ENCODE measurements at regions of chr9 and their contacts with region 1.

Region 1: GRCh38 chr9:4297151-4297785 is 2.6 kb downstream of the GLIS3 start:
- DNase-seq: peak; percentile 11
- H3K4me3 Mint-ChIP-seq: peak overlapping the region; percentile 95
- H3K27ac Mint-ChIP-seq: peak overlapping the region; percentile 91
- H3K4me1 Mint-ChIP-seq: peaks cover 45% of the 10 kb centered on the region
- H3K27me3 Mint-ChIP-seq: peaks cover 42% of the 10 kb centered on the region

Region 2: GRCh38 chr9:2837915-2838314 is 1459.4 kb before region 1 on chr9:
- intact Hi-C with region 1: loop called (anchors 5 kb)
- DNase-seq: no peak
- H3K4me3 Mint-ChIP-seq: no peak overlapping the region
- H3K27ac Mint-ChIP-seq: no peak overlapping the region
- H3K4me1 Mint-ChIP-seq: peaks cover 30% of the 10 kb centered on the region
- H3K27me3 Mint-ChIP-seq: no peaks in the 10 kb centered on the region

Region 3: DNA sequence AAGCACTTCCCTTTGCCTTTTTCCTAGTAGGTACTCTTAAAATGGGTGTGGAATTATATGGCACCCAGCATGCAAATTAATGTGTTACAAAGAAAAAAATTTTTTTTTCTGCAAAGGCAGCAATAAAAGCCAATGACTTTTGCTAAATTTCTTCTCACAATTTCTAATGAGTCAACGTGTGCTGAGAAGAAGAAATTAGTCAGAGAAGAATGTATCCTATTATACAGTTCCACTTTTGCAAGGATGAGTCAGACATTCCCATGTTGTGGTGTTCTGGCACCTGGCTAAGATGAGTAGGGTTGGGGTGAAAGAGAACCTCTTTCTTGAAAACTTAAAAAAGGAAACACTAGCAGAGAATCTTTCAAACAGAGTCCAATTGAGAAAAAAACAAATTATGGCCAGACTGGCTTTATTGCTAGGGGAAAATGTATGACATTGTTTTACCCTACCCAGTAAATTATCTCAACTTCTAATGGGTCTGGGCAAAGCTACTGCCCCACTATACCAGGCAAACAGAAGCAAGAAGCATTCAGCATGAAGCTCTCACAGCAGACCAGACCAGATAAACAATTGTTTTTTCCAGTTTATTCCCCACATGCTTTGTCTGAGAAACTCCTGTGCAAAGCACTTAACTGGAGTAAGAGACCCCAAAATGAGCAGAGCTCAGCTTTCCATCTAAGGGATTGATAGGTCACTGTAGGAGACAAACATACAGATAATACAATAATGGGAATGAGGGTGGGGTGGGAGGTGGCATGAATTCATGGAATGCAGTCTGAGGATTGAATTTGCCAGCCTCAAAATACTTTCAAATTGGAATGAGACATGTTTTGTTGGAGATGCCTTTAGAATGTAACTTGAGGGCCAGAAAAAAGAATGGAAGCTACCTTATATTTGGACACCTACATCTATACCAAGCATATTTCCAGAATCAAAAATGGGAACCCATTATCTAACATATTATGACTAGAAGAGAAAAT is 550.7 kb before region 1 on chr9:
- intact Hi-C with region 1: loop called (anchors 5 kb)
- DNase-seq: no peak
- H3K4me3 Mint-ChIP-seq: peak overlapping the region; percentile 4
- H3K27ac Mint-ChIP-seq: peak overlapping the region; percentile 83
- H3K4me1 Mint-ChIP-seq: peaks cover 41% of the 10 kb centered on the region
- H3K27me3 Mint-ChIP-seq: no peaks in the 10 kb centered on the region

Region 4: GRCh38 chr9:4315582-4316215 is 18.4 kb after region 1 on chr9:
- intact Hi-C with region 1: no loop called
- DNase-seq: peak; percentile 60
- H3K4me3 Mint-ChIP-seq: no peak overlapping the region
- H3K27ac Mint-ChIP-seq: no peak overlapping the region
- H3K4me1 Mint-ChIP-seq: peaks cover 5% of the 10 kb centered on the region
- H3K27me3 Mint-ChIP-seq: peaks cover 13% of the 10 kb centered on the region

Region 5: GRCh38 chr9:4339357-4339756 is 42.1 kb after region 1 on chr9:
- intact Hi-C with region 1: loop called (anchors 1 kb)
- DNase-seq: peak; percentile 69
- H3K4me3 Mint-ChIP-seq: no peak overlapping the region
- H3K27ac Mint-ChIP-seq: peak overlapping the region; percentile 77
- H3K4me1 Mint-ChIP-seq: peaks cover 10% of the 10 kb centered on the region
- H3K27me3 Mint-ChIP-seq: peaks cover 4% of the 10 kb centered on the region

Region 6: GRCh38 chr9:4365055-4365454 is 67.8 kb after region 1 on chr9:
- intact Hi-C with region 1: no loop called
- DNase-seq: no peak
- H3K4me3 Mint-ChIP-seq: no peak overlapping the region
- H3K27ac Mint-ChIP-seq: no peak overlapping the region
- H3K4me1 Mint-ChIP-seq: no peaks in the 10 kb centered on the region
- H3K27me3 Mint-ChIP-seq: peaks cover 6% of the 10 kb centered on the region

Region 7: GRCh38 chr9:4740638-4741364 is 443.5 kb after region 1 on chr9 and contains the start of gene AK3:
- intact Hi-C with region 1: loop called (anchors 5 kb)
- DNase-seq: peak; percentile 81
- H3K4me3 Mint-ChIP-seq: peak within 1 kb of the TSS; percentile 89
- H3K27ac Mint-ChIP-seq: peak within 1 kb of the TSS; percentile 92
- H3K4me1 Mint-ChIP-seq: peaks cover 29% of the 10 kb centered on the region
- H3K27me3 Mint-ChIP-seq: no peaks in the 10 kb centered on the region
- total RNA-seq, gene AK3: 23.9 and 28.5 TPM in 2 replicates

Measured in activated T-helper 1 cell treated with anti-CD3 and anti-CD28 coated beads, Interleukin-12 subunit alpha, Interleukin-12 subunit beta, Interleukin-2, Interleukin-4 antibody, amounts not matched to agents 30 ng/mL and 10 ng/mL and 1 ng/mL, durations not matched to agents 14 hours and 24 hours and 36 hours (primary cell).